Activated T-helper 2 cell treated with anti-CD3 and anti-CD28 coated beads, Interferon-gamma antibody, Interleukin-2, Interleukin-4, amounts not matched to agents 10 μg/mL and 5 μg/mL and 100 μg/mL, durations not matched to agents 14 hours and 24 hours and 36 hours (primary cell): ENCODE measurements at regions of chr19 and their contacts with region 1.

Region 1: DNA sequence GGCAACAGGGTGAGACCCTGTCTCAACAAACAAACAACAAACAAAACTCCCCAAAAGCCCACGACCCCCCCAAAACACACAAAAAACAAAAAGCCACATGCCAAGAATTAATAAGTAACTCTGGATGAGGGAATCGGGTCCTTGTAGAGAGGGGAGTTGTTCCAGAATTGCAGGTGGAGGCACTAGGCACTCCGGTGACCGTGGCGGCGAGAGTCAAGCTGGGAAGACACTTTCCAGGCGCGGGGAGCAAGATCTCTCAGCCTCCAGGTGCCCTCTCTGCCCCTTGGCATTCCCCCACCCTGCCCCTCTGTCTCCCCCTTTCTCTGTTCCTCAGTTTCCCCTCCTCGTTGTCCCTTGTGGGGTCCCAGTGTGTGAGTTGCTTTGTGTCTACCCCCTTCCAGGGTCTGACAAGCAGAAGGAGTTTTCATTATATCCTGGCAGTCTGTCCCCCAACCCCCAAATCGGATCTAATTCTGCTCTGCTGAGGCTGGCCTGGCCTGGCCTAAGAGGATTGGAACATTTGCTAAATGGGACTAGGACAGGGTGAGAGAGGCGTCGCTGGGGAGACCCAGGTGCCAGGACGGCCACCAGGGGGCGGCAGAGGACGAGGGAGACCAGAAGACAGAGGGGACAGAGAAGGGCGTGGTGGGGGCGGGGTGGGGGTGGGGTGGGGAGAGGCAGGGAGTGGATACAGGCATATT is 8.3 kb upstream of the CRX start:
- DNase-seq: peak; percentile 56
- H3K4me3 Mint-ChIP-seq: no peak overlapping the region
- H3K27ac Mint-ChIP-seq: no peak overlapping the region
- H3K4me1 Mint-ChIP-seq: no peaks in the 10 kb centered on the region
- H3K27me3 Mint-ChIP-seq: no peaks in the 10 kb centered on the region

Region 2: DNA sequence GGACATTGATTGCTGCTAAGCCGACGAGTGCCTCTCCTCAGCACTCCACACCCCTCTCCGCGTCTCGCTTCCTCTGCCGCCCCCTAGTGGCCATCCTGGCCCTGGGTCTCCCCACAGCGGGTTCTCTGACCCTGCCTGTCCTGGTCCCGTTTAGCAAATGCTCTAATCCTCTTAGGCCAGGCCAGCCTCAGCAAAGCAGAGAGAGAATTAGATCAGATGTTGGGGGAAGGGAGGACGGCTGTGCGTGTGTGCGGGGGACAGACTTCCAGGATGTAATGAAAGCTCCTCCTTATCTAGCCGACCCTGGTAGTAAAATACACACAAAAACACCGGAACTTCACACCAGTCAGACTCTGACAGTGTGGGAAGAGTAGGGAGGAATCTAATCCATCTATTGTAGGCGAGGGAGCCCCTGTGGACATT is 50.1 kb after region 1 on chr19:
- intact Hi-C with region 1: loop called (anchors 5 kb)
- DNase-seq: peak; percentile 69
- H3K4me3 Mint-ChIP-seq: no peak overlapping the region
- H3K27ac Mint-ChIP-seq: no peak overlapping the region
- H3K4me1 Mint-ChIP-seq: no peaks in the 10 kb centered on the region
- H3K27me3 Mint-ChIP-seq: no peaks in the 10 kb centered on the region